Activated T-helper 2 cell treated with anti-CD3 and anti-CD28 coated beads, Interferon-gamma antibody, Interleukin-2, Interleukin-4, amounts not matched to agents 10 μg/mL and 5 μg/mL and 100 μg/mL, durations not matched to agents 14 hours and 24 hours and 36 hours (primary cell): ENCODE measurements at regions of chr5 and their contacts with region 1.

Region 1: GRCh38 chr5:143652108-143652700 is 159.8 kb upstream of the HMHB1 start:
- DNase-seq: no peak
- H3K4me3 Mint-ChIP-seq: no peak overlapping the region
- H3K27ac Mint-ChIP-seq: no peak overlapping the region
- H3K4me1 Mint-ChIP-seq: peaks cover 21% of the 10 kb centered on the region
- H3K27me3 Mint-ChIP-seq: peaks cover 2% of the 10 kb centered on the region

Region 2: GRCh38 chr5:143509758-143510221 is 142.4 kb before region 1 on chr5:
- intact Hi-C with region 1: loop called (anchors 5 kb)
- DNase-seq: no peak
- H3K4me3 Mint-ChIP-seq: no peak overlapping the region
- H3K27ac Mint-ChIP-seq: no peak overlapping the region
- H3K4me1 Mint-ChIP-seq: peaks cover 25% of the 10 kb centered on the region
- H3K27me3 Mint-ChIP-seq: no peaks in the 10 kb centered on the region

Region 3: DNA sequence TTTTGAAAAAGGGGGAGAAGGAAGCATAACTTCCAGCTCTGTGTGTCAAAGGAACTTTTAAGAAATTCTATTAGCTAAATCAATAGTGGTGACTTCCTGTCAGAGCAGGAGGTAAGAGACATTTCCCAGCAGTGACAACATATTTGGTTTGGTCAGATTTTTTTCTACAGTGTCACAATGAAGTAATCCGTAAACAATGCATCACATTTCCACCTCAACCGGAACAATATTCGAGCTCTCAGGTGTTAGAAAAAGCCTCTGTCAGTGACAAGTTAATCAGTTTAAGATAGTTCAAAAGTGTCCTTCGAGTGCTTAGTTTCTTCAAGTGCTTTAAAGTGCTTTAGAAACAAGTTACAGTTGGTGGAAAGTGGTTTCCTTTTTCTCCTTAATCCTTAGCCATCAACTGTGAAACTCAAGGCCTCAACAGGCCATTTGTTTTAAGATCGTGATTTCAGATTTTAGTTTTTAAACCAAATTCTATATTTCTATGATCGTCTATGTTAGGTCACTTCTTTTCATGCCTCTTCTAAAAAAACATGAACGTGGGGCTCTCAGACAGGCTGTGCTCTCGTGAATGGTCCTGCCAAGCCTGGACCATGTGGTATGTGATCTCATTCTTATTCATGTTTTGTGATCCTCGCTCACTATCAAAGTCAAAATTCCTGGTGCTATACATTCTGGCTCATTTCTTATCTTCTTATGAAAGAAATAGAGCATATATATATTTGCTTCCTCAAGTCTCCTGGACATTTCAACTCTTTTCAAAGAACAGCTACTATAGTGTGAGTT is 22.1 kb before region 1 on chr5:
- intact Hi-C with region 1: no loop called
- DNase-seq: no peak
- H3K4me3 Mint-ChIP-seq: no peak overlapping the region
- H3K27ac Mint-ChIP-seq: no peak overlapping the region
- H3K4me1 Mint-ChIP-seq: peaks cover 9% of the 10 kb centered on the region
- H3K27me3 Mint-ChIP-seq: no peaks in the 10 kb centered on the region

Region 4: GRCh38 chr5:143679777-143680176 is 27.6 kb after region 1 on chr5:
- intact Hi-C with region 1: loop called (anchors 1 kb)
- DNase-seq: no peak
- H3K4me3 Mint-ChIP-seq: no peak overlapping the region
- H3K27ac Mint-ChIP-seq: peak overlapping the region; percentile 71
- H3K4me1 Mint-ChIP-seq: peaks cover 27% of the 10 kb centered on the region
- H3K27me3 Mint-ChIP-seq: no peaks in the 10 kb centered on the region